ENCODE measurements at regions of chr3 and their contacts with region 1.

Region 1: DNA sequence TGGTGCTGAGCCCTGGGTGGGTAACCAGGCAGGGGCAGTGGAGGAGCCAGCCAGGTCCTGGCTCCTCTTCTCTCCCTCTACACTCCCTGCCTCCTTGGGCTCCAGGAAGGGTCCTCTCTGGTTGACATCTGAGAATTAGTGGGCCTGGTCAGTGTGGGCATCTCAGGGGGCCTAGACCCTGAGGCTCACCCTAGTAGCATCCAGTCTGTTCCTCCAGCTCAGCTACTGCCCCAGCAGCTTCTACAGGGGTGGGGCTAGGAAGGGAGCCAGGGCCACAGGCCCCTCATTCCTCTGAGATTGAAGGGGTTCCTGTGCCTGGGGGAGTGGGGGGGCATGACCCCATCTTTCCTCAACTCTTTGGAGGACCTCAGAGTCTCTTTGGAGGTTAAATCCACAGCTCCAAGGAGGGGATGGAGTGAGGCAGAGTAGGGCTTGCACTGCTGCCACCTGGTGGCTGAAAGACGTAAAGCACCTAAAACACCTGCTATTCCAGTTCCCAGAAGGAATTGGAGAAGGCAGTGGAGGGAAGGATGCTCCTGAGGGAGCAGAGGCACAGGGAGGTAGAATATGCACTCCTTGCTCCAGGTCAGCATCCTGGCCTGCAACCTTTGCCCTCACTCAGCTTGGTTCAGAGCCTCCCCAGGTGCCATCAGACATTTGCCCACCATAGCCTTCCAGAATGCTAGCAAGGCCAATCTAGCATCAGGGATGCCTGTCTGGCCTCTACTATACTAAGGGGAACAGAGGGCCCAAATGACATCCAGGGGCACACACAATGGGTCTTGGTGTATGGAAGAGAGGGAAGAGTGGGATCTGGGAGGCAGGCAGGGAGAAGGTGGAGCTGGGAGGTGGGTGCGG is 25.1 kb downstream of the C3orf18 start:
- DNase-seq: peak; percentile 42 to 90
- ATAC-seq: peak; percentile 73 to 92
- H3K4me3 ChIP-seq: no peak overlapping the region
- H3K27ac ChIP-seq: no peak overlapping the region
- H3K4me1 ChIP-seq: no peaks in the 10 kb centered on the region
- CTCF ChIP-seq: peak; percentile 71
- EP300 ChIP-seq: no peak
- POLR2A ChIP-seq: no peak
- RAD21 ChIP-seq: peak; percentile 48 to 67; a peak in 4 of 5 replicates

Region 2: DNA sequence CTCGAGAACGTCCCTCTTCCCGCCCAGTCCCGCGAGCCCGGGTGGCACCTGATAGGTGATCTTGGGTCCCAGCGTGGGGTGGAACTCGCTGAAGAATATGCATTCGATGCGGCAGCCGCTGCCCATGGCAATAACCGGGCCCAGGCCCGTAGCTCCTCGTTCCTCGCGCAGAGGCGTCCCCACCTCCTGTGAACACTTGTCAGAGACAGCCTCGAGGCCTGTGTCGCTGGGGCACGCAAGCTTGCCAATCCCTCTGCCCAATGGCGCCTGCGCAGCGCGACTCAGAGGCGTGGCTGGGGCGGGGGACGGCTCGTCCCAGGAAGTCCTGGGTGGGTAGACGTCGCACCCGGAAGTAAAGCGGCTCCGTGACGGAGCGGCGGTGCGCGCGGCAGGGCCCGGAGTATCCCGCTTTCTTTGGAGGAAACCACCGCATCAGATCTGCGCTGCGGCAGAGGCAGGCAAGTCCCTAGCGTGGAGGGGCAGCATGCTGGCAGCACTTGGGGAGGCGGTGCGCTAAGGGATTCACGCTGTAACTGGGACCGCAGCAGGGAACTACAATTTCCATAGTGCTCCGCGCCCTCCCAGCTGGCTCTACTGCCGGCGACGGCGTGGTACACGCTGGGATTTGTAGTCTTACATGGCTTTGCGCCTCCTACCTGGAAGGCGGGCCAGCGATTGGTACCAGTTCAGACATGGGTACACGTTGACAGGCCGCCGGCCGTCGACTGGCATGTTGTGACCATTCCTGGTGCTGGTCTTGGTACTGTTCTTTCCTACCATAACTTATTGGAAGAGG is 191.7 kb before region 1 on chr3 and contains the starts of genes CYB561D2 and NPRL2:
- CTCF ChIA-PET with region 1: interaction called, 60 read pairs
- POLR2A ChIA-PET with region 1: interaction called, 3 read pairs
- DNase-seq: peak; percentile 92
- ATAC-seq: peak; percentile 86 to 91
- H3K4me3 ChIP-seq: peak within 1 kb of the TSS; percentile 76
- H3K27ac ChIP-seq: peak within 1 kb of the TSS; percentile 97 to 100
- H3K4me1 ChIP-seq: peaks cover 28% of the 10 kb centered on the region; the same call in 2 of the 3 replicates
- CTCF ChIP-seq: no peak
- EP300 ChIP-seq: no peak
- POLR2A ChIP-seq: peak; percentile 68
- RAD21 ChIP-seq: no peak
- polyA plus RNA-seq, gene CYB561D2: 14.4 and 23.1 TPM in 2 replicates
- polyA plus RNA-seq, gene NPRL2: 19.9 and 28.5 TPM in 2 replicates

Region 3: DNA sequence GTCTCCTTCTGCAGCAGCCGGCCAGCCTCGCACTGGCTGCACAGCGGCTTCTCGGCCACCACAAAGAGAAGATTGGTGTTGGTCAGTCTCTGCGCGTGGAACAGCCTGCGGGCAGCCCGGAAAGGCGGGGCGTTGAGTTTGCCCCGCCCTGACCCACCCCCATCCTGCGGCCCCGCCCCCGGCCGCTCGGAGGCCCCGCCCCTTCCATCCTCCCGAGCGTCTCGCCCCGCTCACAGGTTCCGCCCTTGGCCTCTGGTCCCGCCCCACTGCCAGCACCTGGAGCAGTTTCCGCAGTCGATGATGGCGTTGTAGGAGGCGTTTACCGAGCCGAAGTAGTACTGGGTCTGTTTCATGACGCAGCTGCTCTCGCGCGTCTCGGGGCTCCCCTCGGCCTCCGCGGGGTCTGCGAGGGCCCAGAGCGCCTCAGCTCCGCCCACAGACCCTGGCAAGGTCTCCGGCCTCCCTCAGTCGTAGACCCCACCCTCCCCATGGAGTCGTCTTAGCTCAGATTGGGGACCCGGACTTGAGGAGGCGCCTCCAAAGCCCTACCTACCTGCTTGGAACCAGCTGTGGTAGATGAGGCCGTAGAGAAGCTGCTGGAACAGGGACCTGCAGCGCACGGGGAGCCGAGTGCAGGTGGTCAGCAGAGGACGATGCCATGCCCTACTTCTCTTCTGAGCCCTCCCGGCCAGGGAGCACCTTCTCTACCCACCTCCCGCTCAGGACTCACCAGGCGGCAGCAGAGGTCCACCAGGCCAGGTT is 177.1 kb before region 1 on chr3:
- CTCF ChIA-PET with region 1: interaction called, 14 read pairs
- POLR2A ChIA-PET with region 1: no interaction called
- DNase-seq: no peak
- ATAC-seq: peak in 1 of 2 experiments; percentile 47; a peak in 3 of 6 replicates
- H3K4me3 ChIP-seq: no peak overlapping the region
- H3K27ac ChIP-seq: no peak overlapping the region
- H3K4me1 ChIP-seq: no peaks in the 10 kb centered on the region
- CTCF ChIP-seq: no peak
- EP300 ChIP-seq: no peak
- POLR2A ChIP-seq: no peak
- RAD21 ChIP-seq: no peak

Region 4: DNA sequence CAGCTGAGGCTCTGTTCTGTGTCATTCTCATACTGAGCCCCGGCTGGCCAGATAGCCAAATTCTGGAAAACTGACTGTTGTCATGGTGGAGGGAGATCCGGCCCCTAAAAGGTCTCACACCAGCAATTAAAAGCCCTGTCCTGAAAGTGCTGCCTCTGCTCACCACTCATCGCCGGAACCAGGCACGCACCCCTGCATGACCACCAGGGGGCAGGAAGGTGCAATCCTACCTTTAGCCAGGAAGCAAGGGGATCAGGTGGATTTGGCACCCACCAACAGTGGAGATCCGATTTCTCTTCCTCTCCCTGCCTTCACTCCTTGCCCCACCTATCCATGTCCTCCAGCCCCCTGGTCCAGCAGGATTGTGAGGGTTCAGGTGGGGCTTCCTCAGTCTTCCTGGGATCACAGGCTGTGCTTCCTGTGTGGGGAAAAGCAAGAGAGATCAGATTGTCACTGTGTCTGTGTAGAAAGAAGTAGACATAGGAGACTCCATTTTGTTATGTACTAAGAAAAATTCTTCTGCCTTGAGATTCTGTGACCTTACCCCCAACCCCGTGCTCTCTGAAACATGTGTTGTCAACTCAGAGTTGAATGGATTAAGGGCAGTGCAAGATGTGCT is 22.8 kb before region 1 on chr3:
- CTCF ChIA-PET with region 1: interaction called, 35 read pairs
- POLR2A ChIA-PET with region 1: no interaction called
- DNase-seq: peak; percentile 50 to 57
- ATAC-seq: peak; percentile 72 to 94
- H3K4me3 ChIP-seq: no peak overlapping the region
- H3K27ac ChIP-seq: no peak overlapping the region
- H3K4me1 ChIP-seq: no peaks in the 10 kb centered on the region
- CTCF ChIP-seq: peak; percentile 58
- EP300 ChIP-seq: no peak
- POLR2A ChIP-seq: no peak
- RAD21 ChIP-seq: peak; percentile 43 to 50; a peak in 4 of 5 replicates

Region 5: DNA sequence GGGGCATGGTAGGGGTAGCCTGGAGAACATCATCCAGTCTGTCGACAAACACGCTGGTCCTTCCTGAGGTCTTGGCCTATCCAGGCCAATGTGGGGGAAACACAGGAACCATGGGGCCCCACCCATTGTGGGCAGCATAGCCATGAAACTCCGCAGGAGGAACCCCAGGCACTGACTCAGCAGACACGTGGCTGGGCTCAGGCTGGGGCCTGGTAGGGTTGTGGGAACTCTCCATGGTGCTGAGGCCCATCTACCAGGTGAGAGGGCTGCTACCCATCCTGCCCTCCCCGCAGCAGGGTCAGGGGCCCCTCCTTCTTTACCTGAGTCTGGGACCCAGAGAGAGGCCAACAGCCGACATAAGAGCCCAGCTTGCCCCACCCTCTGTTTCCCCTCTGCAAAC is 16.4 kb before region 1 on chr3:
- CTCF ChIA-PET with region 1: interaction called, 35 read pairs
- POLR2A ChIA-PET with region 1: no interaction called
- DNase-seq: peak; percentile 19 to 40
- ATAC-seq: peak; percentile 63 to 72; a peak in 4 of 6 replicates
- H3K4me3 ChIP-seq: no peak overlapping the region
- H3K27ac ChIP-seq: no peak overlapping the region
- H3K4me1 ChIP-seq: no peaks in the 10 kb centered on the region
- CTCF ChIP-seq: no peak
- EP300 ChIP-seq: no peak
- POLR2A ChIP-seq: no peak
- RAD21 ChIP-seq: no peak

Region 6: DNA sequence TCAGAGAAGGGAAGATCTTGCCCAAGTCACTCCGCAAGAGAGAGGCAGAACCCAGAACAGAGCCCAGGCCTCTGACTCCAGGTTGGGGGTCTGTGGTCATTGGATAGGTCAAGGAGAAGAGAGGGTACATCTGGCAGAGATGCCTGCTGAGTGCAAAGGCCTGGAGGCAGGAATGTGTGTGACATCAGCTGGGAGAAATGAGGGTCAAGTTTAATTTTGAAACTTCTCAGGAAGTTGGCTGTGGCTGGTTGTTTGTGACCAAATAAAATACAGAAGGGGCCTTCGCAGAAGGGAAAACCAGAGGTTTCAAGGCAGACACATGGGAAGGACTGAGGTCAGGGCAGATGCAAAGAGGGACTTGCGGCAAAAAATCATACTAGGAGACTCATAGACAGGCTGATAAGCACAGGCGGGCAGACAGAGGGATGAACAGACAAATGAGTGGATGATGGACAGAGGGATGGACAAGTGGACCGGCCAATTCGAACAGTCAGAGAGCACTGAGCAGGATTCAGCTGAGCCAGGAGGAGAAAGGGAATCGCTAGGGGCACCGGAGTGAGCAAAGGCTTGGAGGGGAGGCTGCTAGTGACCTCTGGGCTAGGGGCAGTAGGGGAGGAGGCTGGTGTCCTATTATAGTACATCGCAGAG is 10.2 kb before region 1 on chr3:
- CTCF ChIA-PET with region 1: interaction called, 11 read pairs
- POLR2A ChIA-PET with region 1: no interaction called
- DNase-seq: no peak
- ATAC-seq: peak in 1 of 2 experiments; percentile 43; a peak in 2 of 6 replicates
- H3K4me3 ChIP-seq: no peak overlapping the region
- H3K27ac ChIP-seq: no peak overlapping the region
- H3K4me1 ChIP-seq: no peaks in the 10 kb centered on the region
- CTCF ChIP-seq: no peak
- EP300 ChIP-seq: no peak
- POLR2A ChIP-seq: no peak
- RAD21 ChIP-seq: no peak

Region 7: DNA sequence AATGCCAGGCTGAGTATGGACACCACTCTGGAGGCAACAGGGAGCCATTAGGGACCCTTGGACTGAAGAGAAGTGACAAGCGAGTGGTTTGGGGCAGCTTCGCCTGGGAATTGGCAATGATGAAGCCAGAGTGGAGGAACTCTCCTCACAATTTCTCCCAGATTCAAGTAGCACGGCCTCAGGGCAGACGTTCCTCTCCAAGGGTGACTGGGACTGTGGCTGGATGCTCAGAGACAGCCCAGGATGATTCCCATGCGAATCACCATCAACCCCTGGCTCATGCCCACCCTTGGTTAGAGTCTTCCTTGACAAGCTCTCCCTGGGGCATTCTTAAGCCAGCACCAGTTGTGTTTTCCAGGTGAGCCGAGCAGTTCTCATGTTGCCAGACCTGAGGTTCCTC is 116.0 kb after region 1 on chr3:
- CTCF ChIA-PET with region 1: no interaction called
- POLR2A ChIA-PET with region 1: no interaction called
- DNase-seq: no peak
- ATAC-seq: no peak
- H3K4me3 ChIP-seq: no peak overlapping the region
- H3K27ac ChIP-seq: no peak overlapping the region
- H3K4me1 ChIP-seq: peaks cover 7% of the 10 kb centered on the region; the same call in 2 of the 3 replicates
- CTCF ChIP-seq: no peak
- EP300 ChIP-seq: no peak
- POLR2A ChIP-seq: no peak
- RAD21 ChIP-seq: no peak